Activated CD4-positive, alpha-beta T cell treated with anti-CD3 and anti-CD28 coated beads, Interleukin-2, amount 10 ng/mL, durations not matched to agents 24 days and 14 days (primary cell): ENCODE measurements at regions of chr15 and their contacts with region 1.

Region 1: GRCh38 chr15:98442379-98442833 is 205.9 kb upstream of the IGF1R start:
- DNase-seq: peak; percentile 85
- H3K4me3 Mint-ChIP-seq: no peak overlapping the region
- H3K27ac Mint-ChIP-seq: no peak overlapping the region
- H3K4me1 Mint-ChIP-seq: no peaks in the 10 kb centered on the region
- H3K27me3 Mint-ChIP-seq: peaks cover 5% of the 10 kb centered on the region

Region 2: DNA sequence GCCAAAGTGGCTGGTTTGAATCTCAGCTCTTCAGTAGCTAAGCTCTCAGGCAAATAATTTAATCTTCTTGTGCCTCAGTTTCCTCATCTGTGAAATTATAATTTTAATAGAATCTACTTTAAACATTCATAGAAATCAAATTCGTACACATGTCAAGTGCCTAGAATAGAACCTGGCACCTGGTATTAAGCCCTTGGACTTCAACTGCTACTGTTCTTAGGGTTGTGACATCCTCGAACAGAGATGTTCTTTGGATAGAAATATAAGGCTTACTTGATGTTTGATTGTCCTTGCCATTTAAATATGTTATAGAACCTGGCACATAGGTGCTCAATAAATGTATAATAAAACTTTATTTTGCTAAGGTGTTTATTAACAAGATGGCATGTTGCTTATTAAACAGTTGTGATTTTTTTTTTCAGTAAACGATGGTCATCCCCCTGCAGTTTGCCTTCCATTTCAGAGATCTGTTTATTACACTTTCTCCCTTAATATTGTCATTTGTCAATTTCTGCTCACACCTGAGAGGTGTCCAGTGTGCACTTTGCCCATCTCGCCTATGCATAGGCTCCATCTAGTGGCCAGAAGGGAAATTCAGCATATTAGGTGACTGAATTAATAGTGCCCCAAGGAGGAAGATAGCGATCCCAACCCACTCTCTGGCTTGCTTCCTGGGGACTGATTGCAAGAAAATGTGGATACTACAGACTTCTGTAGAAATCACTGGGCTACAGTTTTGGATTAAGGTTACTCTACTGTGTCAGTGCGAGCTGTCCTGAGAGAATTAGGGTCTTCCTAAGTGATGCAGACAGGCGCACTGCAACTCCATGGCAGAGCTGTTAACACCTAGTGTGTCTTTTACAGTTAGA is 216.7 kb after region 1 on chr15:
- intact Hi-C with region 1: loop called (anchors 5 kb)
- DNase-seq: peak; percentile 84
- H3K4me3 Mint-ChIP-seq: no peak overlapping the region
- H3K27ac Mint-ChIP-seq: no peak overlapping the region
- H3K4me1 Mint-ChIP-seq: peaks cover 7% of the 10 kb centered on the region
- H3K27me3 Mint-ChIP-seq: peaks cover 12% of the 10 kb centered on the region

Region 3: DNA sequence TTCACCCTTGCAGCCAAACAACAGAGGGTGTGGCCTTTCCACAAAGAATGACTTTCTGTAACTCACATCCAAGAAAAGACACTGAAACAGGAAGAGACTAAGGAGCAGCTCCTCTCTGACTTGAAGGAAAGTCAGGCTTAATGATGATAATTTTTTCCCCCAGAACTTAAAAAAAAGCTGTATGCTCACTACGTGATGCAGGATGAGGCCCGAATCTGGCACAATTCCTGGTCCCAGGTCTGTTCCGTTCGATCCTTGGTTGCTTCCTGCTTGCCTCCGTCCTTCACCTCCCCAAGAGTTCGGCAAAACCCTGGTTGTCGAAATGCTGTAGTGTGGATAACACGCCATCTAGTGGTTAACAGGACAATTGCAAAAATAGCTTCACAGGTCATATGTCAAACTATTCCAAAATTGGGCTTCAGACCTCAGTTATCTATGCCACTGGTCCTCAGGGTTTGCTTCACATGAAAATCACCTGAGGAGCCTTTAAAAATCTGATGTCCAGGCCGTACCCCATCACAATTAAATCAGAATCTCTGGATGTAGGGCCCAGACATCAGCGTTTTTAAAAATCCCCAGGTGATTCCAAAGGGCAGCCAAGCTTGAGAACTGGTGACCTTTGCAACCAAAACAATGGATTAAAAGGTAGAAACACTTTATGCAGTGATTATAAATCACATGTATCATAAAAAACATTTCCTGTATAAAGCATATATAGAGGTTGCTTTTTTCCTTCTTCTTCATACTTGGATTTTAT is 634.3 kb after region 1 on chr15:
- intact Hi-C with region 1: loop called (anchors 1 kb)
- DNase-seq: peak; percentile 84
- H3K4me3 Mint-ChIP-seq: peak overlapping the region; percentile 78
- H3K27ac Mint-ChIP-seq: no peak overlapping the region
- H3K4me1 Mint-ChIP-seq: peaks cover 5% of the 10 kb centered on the region
- H3K27me3 Mint-ChIP-seq: peaks cover 22% of the 10 kb centered on the region

Region 4: GRCh38 chr15:99213187-99213811 is 770.9 kb after region 1 on chr15:
- intact Hi-C with region 1: loop called (anchors 5 kb)
- DNase-seq: peak; percentile 89
- H3K4me3 Mint-ChIP-seq: no peak overlapping the region
- H3K27ac Mint-ChIP-seq: no peak overlapping the region
- H3K4me1 Mint-ChIP-seq: no peaks in the 10 kb centered on the region
- H3K27me3 Mint-ChIP-seq: peaks cover 2% of the 10 kb centered on the region